Aorta (tissue), 5 donors: ENCODE measurements at regions of chr19 and their contacts with region 1.

Region 1: GRCh38 chr19:45439569-45440254 is 16.0 kb upstream of the ERCC1 start:
- DNase-seq: peak; percentile 92 to 97
- ATAC-seq: peak; percentile 76
- H3K4me3 ChIP-seq: peak overlapping the region; percentile 31 to 46
- H3K27ac ChIP-seq: peak overlapping the region in 1 of 2 donors; percentile 87
- H3K4me1 ChIP-seq: no peaks in the 10 kb centered on the region
- H3K27me3 ChIP-seq: no peaks in the 10 kb centered on the region

Region 2: GRCh38 chr19:45323671-45324081 is 116.0 kb before region 1 on chr19:
- intact Hi-C with region 1: no loop called
- DNase-seq: no peak
- ATAC-seq: no peak
- H3K4me3 ChIP-seq: no peak overlapping the region
- H3K27ac ChIP-seq: no peak overlapping the region
- H3K4me1 ChIP-seq: no peaks in the 10 kb centered on the region
- H3K27me3 ChIP-seq: no peaks in the 10 kb centered on the region

Region 3: GRCh38 chr19:45478454-45479238 is 38.9 kb after region 1 on chr19:
- intact Hi-C with region 1: loop called (anchors 1 kb)
- DNase-seq: peak; percentile 89 to 94
- ATAC-seq: peak; percentile 87
- H3K4me3 ChIP-seq: peak overlapping the region; percentile 18 to 21
- H3K27ac ChIP-seq: peak overlapping the region; percentile 3 to 90
- H3K4me1 ChIP-seq: peaks cover 0 to 2% of the 10 kb centered on the region in 2 donors
- H3K27me3 ChIP-seq: no peaks in the 10 kb centered on the region